Mammary epithelial cell (primary cell): ENCODE measurements at regions of chr1 and their contacts with region 1.

Region 1: GRCh38 chr1:169511316-169512028 is 25.7 kb upstream of the SLC19A2 start:
- DNase-seq: peak; percentile 84
- H3K4me3 ChIP-seq: no peak overlapping the region
- H3K27ac ChIP-seq: peak overlapping the region; percentile 50
- H3K4me1 ChIP-seq: peaks cover 18% of the 10 kb centered on the region
- H3K27me3 ChIP-seq: no peaks in the 10 kb centered on the region
- CTCF ChIP-seq: no peak

Region 2: GRCh38 chr1:169495046-169495775 is 16.3 kb before region 1 on chr1:
- CTCF ChIA-PET with region 1: no interaction called
- dilution Hi-C with region 1: no loop called
- in situ Hi-C with region 1: no loop called
- intact Hi-C with region 1: loop called (anchors 2 kb)
- DNase-seq: peak; percentile 77
- H3K4me3 ChIP-seq: no peak overlapping the region
- H3K27ac ChIP-seq: peak overlapping the region; percentile 18
- H3K4me1 ChIP-seq: peaks cover 13% of the 10 kb centered on the region
- H3K27me3 ChIP-seq: no peaks in the 10 kb centered on the region
- CTCF ChIP-seq: no peak

Region 3: GRCh38 chr1:169529068-169529696 is 17.7 kb after region 1 on chr1:
- CTCF ChIA-PET with region 1: no interaction called
- dilution Hi-C with region 1: no loop called
- in situ Hi-C with region 1: no loop called
- intact Hi-C with region 1: loop called (anchors 1 kb)
- DNase-seq: peak; percentile 95
- H3K4me3 ChIP-seq: peak overlapping the region in 2 of 3 experiments; percentile 13 to 15
- H3K27ac ChIP-seq: peak overlapping the region; percentile 55
- H3K4me1 ChIP-seq: peaks cover 27% of the 10 kb centered on the region
- H3K27me3 ChIP-seq: no peaks in the 10 kb centered on the region
- CTCF ChIP-seq: no peak